Body of pancreas (tissue), 4 donors: ENCODE measurements at regions of chr15 and their contacts with region 1.

Region 1: GRCh38 chr15:80152180-80152845 is 486 bp upstream of the FAH start:
- DNase-seq: peak; percentile 96 to 99 (median 98)
- ATAC-seq: peak; percentile 92
- H3K4me3 ChIP-seq: peak overlapping the region; percentile 19 to 53
- H3K27ac ChIP-seq: peak overlapping the region; percentile 73 to 78 (median 77)
- H3K4me1 ChIP-seq: peaks cover 13% of the 10 kb centered on the region
- H3K27me3 ChIP-seq: no peaks in the 10 kb centered on the region
- CTCF ChIP-seq: no peak
- POLR2A ChIP-seq: no peak

Region 2: DNA sequence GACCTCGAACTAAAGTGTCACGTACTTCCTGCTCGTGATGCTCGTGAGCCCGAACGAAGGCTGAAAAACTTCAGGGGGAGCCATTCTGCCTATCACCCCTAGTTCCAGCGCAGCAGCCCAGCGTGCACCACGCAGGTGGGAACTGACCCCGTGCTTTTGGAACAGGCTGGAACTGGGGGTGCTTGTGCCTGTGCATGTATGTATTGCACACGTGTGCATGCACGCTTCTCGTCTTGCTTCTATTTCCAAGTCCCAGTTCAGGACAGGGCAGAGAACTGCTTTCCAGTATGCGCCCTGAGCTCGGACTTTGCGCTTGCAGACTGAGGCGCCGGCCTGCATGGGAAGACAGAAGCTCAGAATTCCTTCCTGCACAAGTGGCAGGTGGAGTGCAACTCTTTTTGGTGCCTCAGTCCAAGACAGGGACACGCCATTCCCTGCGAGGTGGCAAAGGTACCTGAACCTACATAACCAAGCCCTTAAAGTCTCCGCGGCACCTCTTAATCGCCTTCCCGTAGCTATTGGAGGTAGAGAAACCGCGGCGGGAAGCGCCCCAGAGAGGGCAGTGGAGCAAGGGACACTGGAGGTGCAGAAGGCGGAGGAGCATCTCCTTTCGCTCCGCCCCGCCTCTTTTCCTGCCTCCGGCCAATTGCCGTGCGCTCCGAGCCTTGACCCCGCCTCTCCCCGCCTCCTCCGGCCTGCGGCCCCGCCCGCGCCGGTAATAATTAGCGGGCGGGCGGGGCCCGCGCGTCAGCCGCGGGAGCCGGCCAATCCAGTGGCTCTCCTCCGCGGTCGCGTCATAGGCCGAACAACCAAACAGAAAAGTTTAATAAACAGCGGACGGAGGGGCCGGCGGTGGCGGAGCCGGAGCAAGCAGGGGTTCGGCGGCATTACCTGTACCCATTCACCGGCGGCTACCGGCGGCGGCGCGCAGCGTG is 93.2 kb before region 1 on chr15 and contains the start of gene ZFAND6:
- intact Hi-C with region 1: loop called (anchors 10 kb)
- DNase-seq: peak; percentile 96 to 97 (median 96)
- ATAC-seq: peak; percentile 96
- H3K4me3 ChIP-seq: peak within 1 kb of the TSS; percentile 32 to 46
- H3K27ac ChIP-seq: peak within 1 kb of the TSS; percentile 89 to 99 (median 97)
- H3K4me1 ChIP-seq: peaks cover 26% of the 10 kb centered on the region
- H3K27me3 ChIP-seq: no peaks in the 10 kb centered on the region
- CTCF ChIP-seq: peak in 2 of 7 experiments; percentile 2 to 12
- POLR2A ChIP-seq: peak; percentile 81 to 89 (median 81)
- total RNA-seq, gene ZFAND6: 21.8 to 39.7 TPM